Dendritic cell treated with granulocyte-macrophage colony-stimulating factor and Interleukin-4, amounts not matched to agents 40 ng/mL and 50 ng/mL, for 4 days (primary cell): ENCODE measurements at regions of chr15 and their contacts with region 1.

Region 1: DNA sequence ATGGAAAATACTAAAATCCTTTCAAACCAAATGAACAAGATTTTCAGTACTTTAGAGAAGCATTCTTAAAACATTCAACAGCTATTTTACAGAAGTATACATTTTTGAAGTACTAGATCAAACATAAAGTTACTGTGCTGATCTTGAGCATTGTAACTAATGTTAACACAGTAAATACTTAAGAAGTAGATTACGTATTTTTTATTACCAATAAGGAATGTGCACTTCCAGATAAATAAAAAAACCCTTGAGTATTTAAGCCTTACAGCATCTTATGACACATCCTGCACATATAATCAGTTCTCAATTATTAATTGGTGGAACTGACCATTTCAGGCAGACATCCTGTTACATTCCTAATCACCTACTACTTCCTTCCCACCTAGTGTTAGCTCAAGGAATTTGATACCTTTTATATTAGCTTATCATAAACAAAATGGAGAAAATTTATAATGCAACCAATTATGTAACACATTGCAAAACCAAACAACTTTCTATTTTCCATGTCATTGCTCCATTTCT is 32.8 kb downstream of the COPS2 start:
- H3K4me3 Mint-ChIP-seq: no peak overlapping the region
- H3K27ac Mint-ChIP-seq: no peak overlapping the region
- H3K4me1 Mint-ChIP-seq: no peaks in the 10 kb centered on the region
- H3K27me3 Mint-ChIP-seq: no peaks in the 10 kb centered on the region

Region 2: DNA sequence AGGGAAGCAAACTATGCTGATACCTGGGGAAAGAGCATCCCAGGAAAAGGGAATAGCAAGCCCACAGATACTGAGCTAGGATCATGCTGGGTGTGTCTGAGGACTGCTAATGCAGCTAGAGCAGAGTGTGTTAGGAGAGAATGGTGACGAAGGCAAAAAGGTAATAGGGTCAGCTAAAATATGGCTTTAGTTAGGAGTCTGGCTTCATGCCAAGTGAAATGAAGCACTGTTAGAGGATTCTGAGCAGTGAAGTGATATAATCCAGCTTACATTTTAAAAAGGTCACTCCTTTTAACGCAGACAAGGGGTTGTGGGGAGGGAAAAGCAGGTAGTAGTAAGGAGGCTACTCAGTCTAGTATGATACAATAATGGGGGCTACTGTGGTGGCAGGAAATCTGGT is 106.7 kb before region 1 on chr15:
- intact Hi-C with region 1: loop called (anchors 10 kb)
- H3K4me3 Mint-ChIP-seq: no peak overlapping the region
- H3K27ac Mint-ChIP-seq: no peak overlapping the region
- H3K4me1 Mint-ChIP-seq: no peaks in the 10 kb centered on the region
- H3K27me3 Mint-ChIP-seq: no peaks in the 10 kb centered on the region

Region 3: GRCh38 chr15:49060710-49061505 is 61.7 kb before region 1 on chr15:
- intact Hi-C with region 1: no loop called
- H3K4me3 Mint-ChIP-seq: no peak overlapping the region
- H3K27ac Mint-ChIP-seq: no peak overlapping the region
- H3K4me1 Mint-ChIP-seq: peaks cover 8% of the 10 kb centered on the region
- H3K27me3 Mint-ChIP-seq: no peaks in the 10 kb centered on the region

Region 4: DNA sequence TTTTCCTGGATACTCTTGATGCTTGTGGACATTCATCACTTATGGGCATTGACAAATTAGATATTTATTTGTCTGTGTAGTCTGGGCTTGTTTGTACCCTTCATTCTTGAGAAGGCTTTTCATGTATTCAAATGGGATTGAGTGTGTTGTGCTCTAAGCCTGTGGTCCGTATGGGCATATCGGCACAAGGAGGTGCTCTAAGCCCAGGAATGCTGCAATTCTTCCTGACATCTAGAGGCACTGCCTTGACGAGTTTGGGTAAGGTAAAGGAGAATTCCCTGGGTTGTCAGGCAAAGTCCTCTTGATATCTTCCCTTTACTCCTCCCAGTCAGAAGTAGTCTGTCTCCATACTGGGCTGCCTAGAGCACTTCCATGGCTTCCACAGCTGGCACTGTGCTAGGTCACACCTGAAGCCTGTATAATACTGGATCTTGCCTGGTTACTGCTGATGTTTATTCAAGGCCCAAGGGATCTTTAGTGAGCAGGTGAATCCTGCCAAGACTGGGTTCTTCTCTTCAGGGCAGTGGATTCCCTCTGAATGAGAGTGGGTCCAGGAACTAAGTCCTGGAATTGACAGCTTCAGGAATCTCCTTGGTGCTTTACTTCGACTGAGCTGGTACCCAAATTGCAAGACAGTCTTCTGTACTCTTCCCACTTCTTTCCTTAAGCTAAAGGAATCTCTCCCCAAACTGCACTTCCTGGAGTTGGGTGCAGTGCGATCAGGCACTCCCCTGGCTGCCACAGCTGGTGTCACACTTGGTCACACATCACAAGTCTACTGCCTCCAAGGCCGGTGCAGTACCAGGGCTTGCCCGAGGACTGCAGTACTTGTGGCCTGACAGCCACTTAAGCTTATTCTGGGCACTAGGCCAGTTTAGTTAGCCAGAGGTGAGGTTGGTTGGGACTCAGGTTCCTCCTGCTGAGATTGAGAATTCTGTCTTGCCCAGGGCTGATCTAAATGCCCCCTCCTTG is 93.5 kb after region 1 on chr15:
- intact Hi-C with region 1: no loop called
- H3K4me3 Mint-ChIP-seq: no peak overlapping the region
- H3K27ac Mint-ChIP-seq: no peak overlapping the region
- H3K4me1 Mint-ChIP-seq: peaks cover 5% of the 10 kb centered on the region
- H3K27me3 Mint-ChIP-seq: no peaks in the 10 kb centered on the region